MCF 10A (cell line): ENCODE measurements at regions of chr9 and their contacts with region 1.

Region 1: DNA sequence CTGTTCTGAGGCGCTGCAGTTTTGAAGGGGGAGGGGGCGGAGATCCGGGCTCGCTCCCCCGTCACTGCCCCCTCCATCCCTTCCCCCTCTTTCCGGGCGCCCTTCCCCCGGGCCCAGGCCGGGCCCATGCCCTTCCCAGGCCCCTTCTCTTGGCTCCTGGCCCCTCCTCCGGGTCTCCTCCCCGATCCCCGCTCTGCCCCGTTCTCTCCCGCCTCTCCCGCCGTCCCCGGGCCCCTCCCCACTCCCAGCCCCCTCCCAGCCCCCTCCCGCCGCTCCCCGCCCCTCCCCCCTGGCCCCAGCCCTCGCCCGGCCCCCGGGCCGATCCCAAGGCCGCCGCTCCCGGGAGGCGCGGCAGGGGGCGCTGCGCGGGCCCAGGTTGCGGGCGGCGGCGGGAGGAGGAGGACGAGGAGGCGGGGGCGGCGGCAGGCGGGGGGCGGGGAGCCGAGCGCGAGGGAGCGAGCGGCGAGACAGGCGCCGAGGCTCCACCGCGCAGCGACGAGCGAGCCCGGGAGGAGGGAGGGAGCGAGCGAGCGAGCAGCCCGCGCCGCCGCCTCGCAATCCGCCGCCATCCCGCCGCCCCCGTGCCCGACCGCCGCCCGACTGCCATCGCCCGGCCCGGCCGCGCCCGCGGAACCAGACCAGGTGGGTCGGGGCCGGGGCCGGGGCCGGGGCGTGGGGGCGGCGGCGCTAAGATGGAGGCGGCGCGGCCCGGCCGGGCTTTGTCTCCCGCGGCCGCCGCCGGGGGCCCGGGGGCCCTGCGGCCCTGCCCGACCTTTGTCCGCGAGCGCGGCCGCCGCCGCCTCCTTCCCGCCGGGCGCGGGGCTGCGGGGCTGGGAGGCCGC is at the start of gene PRRC2B:
- DNase-seq: peak; percentile 83
- H3K4me3 Mint-ChIP-seq: peak within 1 kb of the TSS; percentile 79
- H3K27ac Mint-ChIP-seq: peak within 1 kb of the TSS; percentile 85
- H3K4me1 Mint-ChIP-seq: peaks cover 41% of the 10 kb centered on the region
- H3K27me3 Mint-ChIP-seq: no peaks in the 10 kb centered on the region
- CTCF ChIP-seq: peak; percentile 65
- total RNA-seq, gene PRRC2B: 173 and 186 TPM in 2 replicates

Region 2: GRCh38 chr9:131366761-131367401 is 27.0 kb before region 1 on chr9:
- CTCF ChIA-PET with region 1: no interaction called
- POLR2A ChIA-PET with region 1: interaction called, 53 read pairs
- intact Hi-C with region 1: no loop called
- DNase-seq: peak; percentile 70
- H3K4me3 Mint-ChIP-seq: no peak overlapping the region
- H3K27ac Mint-ChIP-seq: peak overlapping the region; percentile 43
- H3K4me1 Mint-ChIP-seq: peaks cover 7% of the 10 kb centered on the region
- H3K27me3 Mint-ChIP-seq: no peaks in the 10 kb centered on the region
- CTCF ChIP-seq: no peak

Region 3: GRCh38 chr9:131407717-131408195 is 13.9 kb after region 1 on chr9:
- CTCF ChIA-PET with region 1: interaction called, 4 read pairs
- POLR2A ChIA-PET with region 1: interaction called, 41 read pairs
- intact Hi-C with region 1: no loop called
- DNase-seq: peak; percentile 67
- H3K4me3 Mint-ChIP-seq: peak overlapping the region; percentile 54
- H3K27ac Mint-ChIP-seq: peak overlapping the region; percentile 49
- H3K4me1 Mint-ChIP-seq: peaks cover 63% of the 10 kb centered on the region
- H3K27me3 Mint-ChIP-seq: no peaks in the 10 kb centered on the region
- CTCF ChIP-seq: peak; percentile 23

Region 4: GRCh38 chr9:131423171-131423581 is 29.3 kb after region 1 on chr9:
- CTCF ChIA-PET with region 1: interaction called, 4 read pairs
- POLR2A ChIA-PET with region 1: interaction called, 16 read pairs
- intact Hi-C with region 1: loop called (anchors 2 kb)
- DNase-seq: peak; percentile 94
- H3K4me3 Mint-ChIP-seq: peak overlapping the region; percentile 51
- H3K27ac Mint-ChIP-seq: peak overlapping the region; percentile 64
- H3K4me1 Mint-ChIP-seq: peaks cover 50% of the 10 kb centered on the region
- H3K27me3 Mint-ChIP-seq: no peaks in the 10 kb centered on the region
- CTCF ChIP-seq: no peak